Naive thymus-derived CD4-positive, alpha-beta T cell (primary cell): ENCODE measurements at regions of chr11 and their contacts with region 1.

Region 1: DNA sequence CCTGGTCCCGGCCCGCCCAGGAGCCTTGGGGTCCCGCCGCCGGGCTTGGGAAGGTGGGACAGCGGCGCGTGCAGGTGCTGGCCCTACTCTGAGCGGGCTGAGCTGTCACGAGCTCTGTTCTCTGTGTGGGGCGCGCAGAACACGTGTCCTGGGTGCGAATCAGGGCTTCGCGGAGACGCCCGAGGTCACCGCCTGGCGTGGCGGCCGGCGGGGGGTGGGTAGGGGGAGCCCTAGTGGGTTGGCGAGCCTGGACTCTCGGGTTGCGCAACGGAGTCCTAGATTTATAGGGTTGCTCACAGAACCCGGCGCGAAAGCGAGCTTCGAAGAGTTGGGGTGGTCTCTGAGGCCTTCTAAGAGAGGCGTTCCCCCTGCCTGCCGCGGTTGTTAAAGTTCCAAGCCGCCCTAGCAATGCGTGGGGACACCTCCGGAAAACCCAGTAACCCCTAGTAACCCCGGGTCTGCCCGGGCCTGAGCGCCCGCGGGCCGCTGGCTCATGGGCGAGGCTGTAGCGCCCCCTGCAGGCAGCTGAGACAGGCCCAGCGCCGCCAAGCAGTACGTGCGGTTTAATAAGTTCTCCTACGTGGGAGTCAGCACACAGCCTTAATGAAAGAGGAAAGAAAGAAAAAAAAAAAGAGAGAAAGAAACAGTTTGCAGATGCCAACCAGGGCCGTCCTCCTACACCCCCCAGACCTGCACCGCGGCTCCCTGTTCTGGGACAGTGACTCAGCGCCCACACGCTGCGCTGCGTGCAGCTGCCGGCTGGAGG is 2.8 kb downstream of the ADM start:
- DNase-seq: peak; percentile 73 to 88 (median 83)
- ATAC-seq: peak; percentile 83
- H3K4me3 ChIP-seq: peak overlapping the region; percentile 99
- H3K4me3 Mint-ChIP-seq: peak overlapping the region; percentile 64 to 100 (median 95)
- H3K27ac ChIP-seq: no peak overlapping the region
- H3K27ac Mint-ChIP-seq: peak overlapping the region in 6 of 9 donors; percentile 15 to 85 (median 46)
- H3K4me1 ChIP-seq: peaks cover 15 to 37% of the 10 kb centered on the region in 2 donors
- H3K4me1 Mint-ChIP-seq: peaks cover 25 to 57% (median 38%) of the 10 kb centered on the region in 7 donors
- H3K27me3 ChIP-seq: peaks cover 3 to 14% of the 10 kb centered on the region in 2 donors
- H3K27me3 Mint-ChIP-seq: peaks cover 31 to 54% (median 44%) of the 10 kb centered on the region in 5 donors

Region 2: DNA sequence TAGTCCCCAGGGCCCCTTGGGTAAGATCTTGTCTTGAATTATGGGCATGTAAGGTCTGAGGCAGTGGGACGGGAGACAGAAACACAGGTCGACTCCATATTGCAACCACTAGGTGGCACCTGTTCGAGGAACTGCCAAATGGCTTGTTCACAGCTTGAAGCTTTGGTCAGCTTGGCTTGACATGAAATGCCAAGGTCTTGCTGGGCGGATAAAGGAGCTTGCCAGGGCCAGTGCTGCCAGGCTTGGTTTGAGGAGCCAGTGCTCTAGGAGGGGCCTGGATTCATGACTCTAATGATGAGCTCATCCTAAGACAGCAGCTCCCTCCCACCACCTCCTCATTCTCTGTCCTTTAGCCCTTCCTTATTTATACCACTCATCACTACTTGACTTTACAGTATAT is 1291.9 kb before region 1 on chr11:
- CTCF ChIA-PET with region 1: no interaction called
- POLR2A ChIA-PET with region 1: no interaction called
- intact Hi-C with region 1: loop called in 1 of 2 experiments (anchors 5 kb)
- DNase-seq: peak; percentile 20 to 59 (median 45)
- ATAC-seq: peak; percentile 82
- H3K4me3 ChIP-seq: no peak overlapping the region
- H3K4me3 Mint-ChIP-seq: no peak overlapping the region
- H3K27ac ChIP-seq: no peak overlapping the region
- H3K27ac Mint-ChIP-seq: no peak overlapping the region
- H3K4me1 ChIP-seq: peaks cover 0 to 9% of the 10 kb centered on the region in 2 donors
- H3K4me1 Mint-ChIP-seq: peaks cover 0 to 28% (median 18%) of the 10 kb centered on the region in 7 donors
- H3K27me3 ChIP-seq: no peaks in the 10 kb centered on the region
- H3K27me3 Mint-ChIP-seq: peaks cover 0 to 20% (median 7%) of the 10 kb centered on the region in 5 donors

Region 3: DNA sequence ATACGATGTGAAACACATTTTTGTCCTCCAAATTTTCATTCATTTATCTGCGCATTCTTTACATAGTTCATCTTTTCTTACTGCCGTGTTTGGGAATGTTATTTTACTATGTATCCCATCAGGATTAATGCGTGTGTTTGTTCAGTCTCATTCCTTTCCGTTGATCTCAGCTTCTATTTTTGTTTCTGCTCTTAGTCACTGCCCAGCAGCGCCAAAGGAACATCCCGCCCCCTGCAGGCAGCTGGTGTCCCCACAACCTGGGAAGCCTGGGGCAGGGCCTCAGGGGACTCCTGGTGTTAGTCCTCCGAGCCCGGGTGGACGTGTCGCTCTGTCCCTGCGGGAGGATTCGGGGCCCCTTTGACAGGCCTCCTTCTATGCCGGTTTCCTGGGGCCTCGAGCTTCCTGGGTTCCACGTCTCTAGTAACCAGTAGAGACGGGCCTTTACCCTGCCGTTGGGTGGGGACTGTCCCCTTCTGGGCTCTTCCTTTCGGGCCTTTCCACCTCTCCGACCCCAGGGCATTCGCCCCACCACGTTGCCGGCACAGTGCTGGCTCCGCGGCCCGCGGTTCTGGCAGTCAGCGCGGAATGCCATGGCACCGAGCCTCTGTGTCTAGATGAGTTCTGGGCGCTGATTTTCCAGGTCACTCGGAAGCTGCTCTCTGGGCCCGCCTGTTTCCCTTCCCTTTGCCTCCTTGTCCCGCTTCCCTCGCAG is 694.4 kb before region 1 on chr11:
- CTCF ChIA-PET with region 1: interaction called, 3 read pairs
- POLR2A ChIA-PET with region 1: no interaction called
- intact Hi-C with region 1: loop called (anchors 1 to 2 kb)
- DNase-seq: peak; percentile 63 to 88 (median 76)
- ATAC-seq: peak; percentile 70
- H3K4me3 ChIP-seq: peak overlapping the region; percentile 71
- H3K4me3 Mint-ChIP-seq: peak overlapping the region; percentile 94 to 99 (median 96)
- H3K27ac ChIP-seq: peak overlapping the region; percentile 75
- H3K27ac Mint-ChIP-seq: peak overlapping the region; percentile 82 to 98 (median 92)
- H3K4me1 ChIP-seq: peaks cover 0 to 14% of the 10 kb centered on the region in 2 donors
- H3K4me1 Mint-ChIP-seq: peaks cover 9 to 34% (median 18%) of the 10 kb centered on the region in 7 donors
- H3K27me3 ChIP-seq: no peaks in the 10 kb centered on the region
- H3K27me3 Mint-ChIP-seq: no peaks in the 10 kb centered on the region

Region 4: GRCh38 chr11:10208131-10208575 is 99.5 kb before region 1 on chr11:
- CTCF ChIA-PET with region 1: interaction called, 70 read pairs
- POLR2A ChIA-PET with region 1: interaction called, 3 read pairs
- intact Hi-C with region 1: loop called (anchors 1 kb)
- DNase-seq: peak in 7 of 9 donors; percentile 10 to 55 (median 44)
- ATAC-seq: peak; percentile 82
- H3K4me3 ChIP-seq: no peak overlapping the region
- H3K4me3 Mint-ChIP-seq: no peak overlapping the region
- H3K27ac ChIP-seq: no peak overlapping the region
- H3K27ac Mint-ChIP-seq: no peak overlapping the region
- H3K4me1 ChIP-seq: no peaks in the 10 kb centered on the region
- H3K4me1 Mint-ChIP-seq: no peaks in the 10 kb centered on the region
- H3K27me3 ChIP-seq: no peaks in the 10 kb centered on the region
- H3K27me3 Mint-ChIP-seq: peaks cover 0 to 16% (median 0%) of the 10 kb centered on the region in 5 donors

Region 5: DNA sequence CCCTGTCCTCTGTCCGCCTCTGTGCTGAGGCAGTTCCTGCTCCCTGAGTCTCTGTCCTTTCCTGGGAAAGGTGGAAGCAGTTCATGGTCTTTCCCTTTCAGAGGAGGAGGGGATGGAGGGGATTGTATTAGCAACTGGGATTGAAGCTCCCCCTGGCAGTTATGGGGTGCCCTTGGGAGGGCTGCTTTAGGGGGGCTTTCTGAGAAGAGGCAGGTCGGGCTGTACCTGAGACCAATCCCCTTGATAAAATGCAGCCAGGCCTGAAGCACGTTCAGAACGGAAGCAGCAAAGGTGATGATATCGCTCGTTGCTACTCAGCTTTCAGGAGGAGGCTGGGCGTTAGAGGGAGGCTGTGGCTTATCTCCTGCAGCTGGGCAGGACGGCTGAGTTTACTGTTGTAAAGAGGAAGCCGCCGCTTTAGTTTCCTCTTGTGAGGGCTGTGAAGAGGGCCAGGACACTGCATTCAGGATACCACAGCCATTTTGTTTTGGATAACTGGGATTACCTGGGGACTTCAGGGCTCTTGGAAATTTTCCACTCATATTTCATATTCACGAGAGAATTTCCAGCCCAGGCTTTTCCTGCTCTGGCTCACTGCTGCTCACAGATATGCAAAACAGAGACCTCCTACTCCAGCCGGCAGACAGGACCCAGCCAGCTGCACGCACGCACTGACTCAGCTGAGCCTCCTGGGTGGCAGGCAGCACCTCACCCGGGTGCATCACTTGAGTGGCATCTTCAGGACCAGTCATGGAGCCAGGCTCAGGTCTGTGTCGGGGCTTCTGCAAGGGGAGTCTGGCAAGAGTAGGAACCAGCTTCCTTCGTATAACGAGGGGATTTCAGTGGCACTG is 148.2 kb after region 1 on chr11:
- CTCF ChIA-PET with region 1: no interaction called
- POLR2A ChIA-PET with region 1: no interaction called
- intact Hi-C with region 1: loop called (anchors 2 to 5 kb)
- DNase-seq: peak; percentile 45 to 85 (median 77)
- ATAC-seq: peak; percentile 71
- H3K4me3 ChIP-seq: peak overlapping the region; percentile 55
- H3K4me3 Mint-ChIP-seq: peak overlapping the region; percentile 78 to 96 (median 92)
- H3K27ac ChIP-seq: peak overlapping the region; percentile 75
- H3K27ac Mint-ChIP-seq: peak overlapping the region; percentile 87 to 98 (median 94)
- H3K4me1 ChIP-seq: peaks cover 62 to 67% of the 10 kb centered on the region in 2 donors
- H3K4me1 Mint-ChIP-seq: peaks cover 72 to 92% (median 90%) of the 10 kb centered on the region in 7 donors
- H3K27me3 ChIP-seq: no peaks in the 10 kb centered on the region
- H3K27me3 Mint-ChIP-seq: peaks cover 0 to 9% (median 0%) of the 10 kb centered on the region in 5 donors

Region 6: GRCh38 chr11:10857709-10858438 is 550.2 kb after region 1 on chr11 and contains the start of gene ZBED5:
- CTCF ChIA-PET with region 1: no interaction called
- POLR2A ChIA-PET with region 1: no interaction called
- intact Hi-C with region 1: loop called (anchors 5 to 10 kb)
- DNase-seq: peak; percentile 93 to 97 (median 96)
- ATAC-seq: peak; percentile 94
- H3K4me3 ChIP-seq: peak within 1 kb of the TSS; percentile 91
- H3K4me3 Mint-ChIP-seq: peak within 1 kb of the TSS; percentile 94 to 100 (median 99)
- H3K27ac ChIP-seq: peak within 1 kb of the TSS; percentile 91
- H3K27ac Mint-ChIP-seq: peak within 1 kb of the TSS; percentile 98 to 100 (median 100)
- H3K4me1 ChIP-seq: peaks cover 5 to 9% of the 10 kb centered on the region in 2 donors
- H3K4me1 Mint-ChIP-seq: peaks cover 20 to 73% (median 60%) of the 10 kb centered on the region in 7 donors
- H3K27me3 ChIP-seq: no peaks in the 10 kb centered on the region
- H3K27me3 Mint-ChIP-seq: peaks cover 0 to 2% (median 0%) of the 10 kb centered on the region in 5 donors
- total RNA-seq, gene ZBED5: 56.7 to 146 (median 94.0) TPM